Endothelial cell of umbilical vein (primary cell): ENCODE measurements at regions of chr11 and their contacts with region 1.

Region 1: GRCh38 chr11:62601394-62602140 is at the start of gene MTA2:
- DNase-seq: peak; percentile 99
- H3K4me3 ChIP-seq: peak within 1 kb of the TSS; percentile 61 to 98 (median 92)
- H3K27ac ChIP-seq: peak within 1 kb of the TSS; percentile 54
- H3K4me1 ChIP-seq: peaks cover 19% of the 10 kb centered on the region
- H3K27me3 ChIP-seq: no peaks in the 10 kb centered on the region
- CTCF ChIP-seq: no peak
- POLR2A ChIP-seq: peak; percentile 75
- total RNA-seq, gene MTA2: 166 and 176 TPM in 2 replicates

Region 2: DNA sequence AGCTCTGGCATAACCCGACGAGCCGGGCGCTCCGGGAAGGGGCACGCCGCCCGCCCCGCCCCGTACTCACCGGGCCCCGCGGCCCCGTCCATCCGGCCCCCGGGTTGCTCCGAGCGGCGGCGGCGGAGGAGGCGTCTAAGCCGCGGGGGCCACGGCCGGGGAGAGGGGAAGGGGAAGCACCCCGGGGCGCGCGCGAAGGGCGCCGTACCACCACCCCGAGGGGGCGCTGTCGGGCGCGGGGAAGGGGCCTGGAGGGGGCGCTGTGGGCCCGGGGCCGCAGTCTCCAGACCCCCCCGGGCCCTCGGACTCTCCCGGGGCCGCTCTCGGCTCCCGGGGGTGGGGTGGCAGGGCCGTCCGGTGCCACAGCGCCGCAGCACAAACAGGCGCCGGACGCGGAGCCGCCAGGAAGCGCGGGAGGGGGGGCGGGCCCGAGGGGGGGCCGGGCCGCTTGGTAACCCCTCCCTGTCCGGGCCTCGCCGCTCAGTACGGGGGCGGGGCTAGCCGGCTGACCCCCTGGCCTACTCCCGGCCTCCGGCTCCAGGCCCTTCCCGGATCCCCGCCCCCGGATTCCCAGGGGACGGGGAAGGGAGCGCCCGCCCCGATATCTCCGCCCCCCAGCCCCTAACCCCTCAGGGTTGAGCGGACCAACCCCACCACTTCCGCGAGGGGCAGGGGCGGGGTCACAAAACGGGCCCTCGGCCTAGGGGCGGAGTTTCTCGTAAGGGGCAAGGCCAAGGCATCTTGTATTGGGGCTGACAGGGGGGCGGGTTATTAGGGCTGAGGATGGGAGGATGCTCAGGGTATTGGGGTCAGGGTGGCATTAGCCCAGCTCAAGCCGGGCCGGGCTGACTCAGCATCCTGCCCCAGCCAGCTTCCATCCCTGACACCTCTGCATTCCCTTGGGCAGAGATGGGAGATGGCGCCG is 11.1 kb after region 1 on chr11 and contains the starts of genes EML3 and ROM1:
- CTCF ChIA-PET with region 1: interaction called, 29 read pairs
- POLR2A ChIA-PET with region 1: no interaction called
- dilution Hi-C with region 1: no loop called
- intact Hi-C with region 1: loop called (anchors 1 kb)
- DNase-seq: peak; percentile 80
- H3K4me3 ChIP-seq: peak within 1 kb of the TSS; percentile 61 to 74 (median 67)
- H3K27ac ChIP-seq: peak within 1 kb of the TSS; percentile 30
- H3K4me1 ChIP-seq: peaks cover 22% of the 10 kb centered on the region
- H3K27me3 ChIP-seq: no peaks in the 10 kb centered on the region
- CTCF ChIP-seq: peak; percentile 88 to 89
- POLR2A ChIP-seq: peak; percentile 41
- total RNA-seq, gene EML3: 101 and 110 TPM in 2 replicates
- total RNA-seq, gene ROM1: 8.2 and 8.8 TPM in 2 replicates